Breast epithelium (tissue), 4 donors: ENCODE measurements at regions of chr22 and their contacts with region 1.

Region 1: DNA sequence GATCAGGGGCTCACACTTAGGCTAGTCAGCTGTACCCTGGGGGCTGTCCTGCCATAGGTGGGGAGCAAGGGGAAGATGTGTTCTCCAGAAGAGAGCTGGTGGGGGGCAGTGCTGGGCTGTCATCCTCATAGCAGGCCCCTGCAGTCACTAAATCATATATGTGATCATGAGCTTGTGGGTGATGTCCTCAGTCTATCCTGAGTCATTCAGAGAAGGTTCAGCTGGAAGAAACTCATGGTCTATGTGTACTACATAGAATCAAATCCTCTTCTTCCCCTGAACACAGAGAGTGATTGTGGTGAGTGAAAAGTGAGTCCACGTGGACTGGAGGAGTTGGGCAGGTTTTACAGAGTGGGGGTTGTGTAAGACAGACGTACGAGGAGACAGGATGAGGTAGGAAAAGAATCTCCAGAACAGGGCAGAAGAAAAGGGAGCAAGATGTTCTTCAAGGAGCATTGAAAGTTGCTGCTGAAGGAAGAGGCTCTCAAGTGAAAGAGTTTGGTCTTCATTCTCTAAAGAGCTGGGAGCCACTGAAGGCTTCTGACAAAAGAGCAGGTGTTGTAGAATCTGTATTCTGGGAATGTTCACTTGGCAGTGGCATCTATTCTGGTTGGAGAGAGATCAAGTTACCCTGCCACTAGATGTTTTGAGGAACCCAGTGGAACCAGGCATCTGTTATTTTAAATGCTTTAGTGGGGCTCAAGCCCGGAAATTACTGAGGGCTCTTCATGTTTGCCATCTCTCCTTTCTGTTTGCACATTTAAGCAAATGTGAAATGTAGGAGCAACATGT is 68.9 kb downstream of the C22orf31 start:
- DNase-seq: no peak
- H3K4me3 ChIP-seq: no peak overlapping the region
- H3K27ac ChIP-seq: no peak overlapping the region
- H3K4me1 ChIP-seq: peaks cover 0 to 6% of the 10 kb centered on the region in 2 donors
- H3K27me3 ChIP-seq: no peaks in the 10 kb centered on the region
- CTCF ChIP-seq: no peak
- POLR2A ChIP-seq: no peak

Region 2: DNA sequence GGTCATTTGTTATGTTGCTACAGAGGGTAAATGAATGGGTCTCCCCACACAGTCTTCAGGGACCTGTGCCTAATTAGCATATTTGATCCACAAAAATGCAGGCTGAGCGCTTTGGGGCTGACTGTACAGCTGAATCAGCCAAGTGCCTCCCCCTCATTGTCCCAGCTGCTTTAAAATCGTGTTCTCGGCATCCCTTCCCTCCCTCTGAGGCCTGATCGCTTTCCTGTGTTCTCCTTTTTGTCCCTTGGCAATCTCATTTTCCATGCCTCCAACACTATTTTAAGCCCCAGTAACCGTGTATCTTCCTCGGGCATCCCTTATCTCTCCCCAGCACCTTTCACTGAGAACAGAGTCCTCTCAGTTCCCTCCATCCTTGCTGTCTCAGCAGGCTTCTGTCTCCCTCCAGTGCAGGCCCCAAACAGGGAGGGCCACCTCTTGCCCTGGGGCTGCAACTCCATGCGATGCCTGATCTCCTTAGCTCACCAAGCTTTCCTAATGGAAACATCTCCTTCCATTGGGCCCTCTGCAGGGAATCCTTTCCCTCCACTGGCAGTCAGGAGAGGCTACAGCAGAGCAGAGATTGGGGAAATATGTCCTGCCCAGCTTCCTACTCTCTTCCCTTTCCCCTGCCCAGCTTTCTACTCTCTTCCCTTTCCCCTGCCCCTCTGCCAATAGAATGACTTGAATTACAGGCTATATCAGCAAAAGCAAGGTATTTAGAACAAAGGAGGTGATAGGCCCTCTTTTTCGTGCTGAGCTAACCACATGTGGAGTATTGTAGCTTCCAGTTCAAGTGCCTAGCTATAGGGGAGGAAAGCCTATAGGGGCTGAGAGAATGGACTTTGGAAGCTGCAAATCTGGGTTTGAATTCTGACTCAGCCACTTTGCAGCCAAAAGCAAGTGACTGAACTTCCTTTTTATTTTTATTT is 788.3 kb after region 1 on chr22:
- intact Hi-C with region 1: loop called (anchors 5 kb)
- DNase-seq: no peak
- H3K4me3 ChIP-seq: no peak overlapping the region
- H3K27ac ChIP-seq: peak overlapping the region; percentile 57 to 77
- H3K4me1 ChIP-seq: peaks cover 7 to 21% of the 10 kb centered on the region in 2 donors
- H3K27me3 ChIP-seq: no peaks in the 10 kb centered on the region
- CTCF ChIP-seq: no peak
- POLR2A ChIP-seq: no peak